ENCODE measurements at regions of chr2 and their contacts with region 1.

Region 1: DNA sequence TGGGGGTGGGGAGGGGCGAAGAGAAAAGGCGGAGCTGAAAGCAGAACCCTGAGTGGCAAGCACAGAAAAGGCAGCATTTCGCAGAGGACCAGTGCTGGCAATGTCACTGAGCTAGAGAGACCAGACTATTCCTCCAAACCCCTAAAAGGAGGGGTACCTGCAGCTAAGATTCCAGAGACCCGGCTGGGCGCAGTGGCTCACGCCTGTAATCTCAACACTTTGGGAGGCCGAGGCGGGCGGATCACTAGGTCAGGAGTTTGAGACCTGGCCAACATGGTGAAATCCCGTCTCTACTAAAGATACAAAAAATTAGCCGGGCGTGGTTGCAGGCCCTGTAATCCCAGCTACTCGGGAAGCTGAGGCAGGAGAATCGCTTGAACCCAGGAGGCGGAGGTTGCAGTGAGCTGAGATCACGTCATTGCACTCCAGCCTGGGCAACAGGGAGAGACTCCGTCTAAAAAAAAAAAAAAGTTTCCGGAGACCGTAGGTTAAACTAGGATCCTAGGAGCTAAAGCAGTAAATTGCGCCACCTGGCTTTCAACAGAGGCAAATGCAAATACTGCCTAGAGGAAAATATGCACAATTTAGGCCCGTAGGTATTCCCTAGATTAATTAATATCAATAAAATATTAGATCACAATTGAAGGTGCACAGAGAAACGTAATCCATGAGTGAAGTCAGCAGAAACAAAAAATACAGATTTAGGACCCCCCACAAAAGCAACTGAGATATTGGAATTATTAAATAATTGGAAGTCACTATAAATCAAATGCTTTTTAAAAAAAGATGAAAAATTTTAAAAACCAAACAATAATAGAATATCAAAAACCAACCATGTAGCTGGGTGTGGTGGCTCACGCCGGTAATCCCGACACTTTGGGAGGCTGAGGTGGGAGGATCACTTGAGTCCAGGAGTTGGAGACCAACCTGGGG is 4.9 kb downstream of the UCN start:
- DNase-seq: no peak
- H3K4me3 ChIP-seq: no peak overlapping the region
- CTCF ChIP-seq: peak; percentile 65

Region 2: GRCh38 chr2:26942543-26943295 is 360.6 kb before region 1 on chr2:
- CTCF ChIA-PET with region 1: no interaction called
- POLR2A ChIA-PET with region 1: no interaction called
- DNase-seq: no peak
- H3K4me3 ChIP-seq: no peak overlapping the region
- CTCF ChIP-seq: peak; percentile 77

Region 3: GRCh38 chr2:27086090-27086723 is 217.2 kb before region 1 on chr2:
- CTCF ChIA-PET with region 1: interaction called, 10 read pairs
- POLR2A ChIA-PET with region 1: no interaction called
- DNase-seq: no peak
- H3K4me3 ChIP-seq: peak overlapping the region; percentile 42
- CTCF ChIP-seq: peak; percentile 94

Region 4: GRCh38 chr2:27147935-27148334 is 155.4 kb before region 1 on chr2:
- CTCF ChIA-PET with region 1: no interaction called
- POLR2A ChIA-PET with region 1: no interaction called
- DNase-seq: no peak
- H3K4me3 ChIP-seq: no peak overlapping the region
- CTCF ChIP-seq: no peak

Region 5: DNA sequence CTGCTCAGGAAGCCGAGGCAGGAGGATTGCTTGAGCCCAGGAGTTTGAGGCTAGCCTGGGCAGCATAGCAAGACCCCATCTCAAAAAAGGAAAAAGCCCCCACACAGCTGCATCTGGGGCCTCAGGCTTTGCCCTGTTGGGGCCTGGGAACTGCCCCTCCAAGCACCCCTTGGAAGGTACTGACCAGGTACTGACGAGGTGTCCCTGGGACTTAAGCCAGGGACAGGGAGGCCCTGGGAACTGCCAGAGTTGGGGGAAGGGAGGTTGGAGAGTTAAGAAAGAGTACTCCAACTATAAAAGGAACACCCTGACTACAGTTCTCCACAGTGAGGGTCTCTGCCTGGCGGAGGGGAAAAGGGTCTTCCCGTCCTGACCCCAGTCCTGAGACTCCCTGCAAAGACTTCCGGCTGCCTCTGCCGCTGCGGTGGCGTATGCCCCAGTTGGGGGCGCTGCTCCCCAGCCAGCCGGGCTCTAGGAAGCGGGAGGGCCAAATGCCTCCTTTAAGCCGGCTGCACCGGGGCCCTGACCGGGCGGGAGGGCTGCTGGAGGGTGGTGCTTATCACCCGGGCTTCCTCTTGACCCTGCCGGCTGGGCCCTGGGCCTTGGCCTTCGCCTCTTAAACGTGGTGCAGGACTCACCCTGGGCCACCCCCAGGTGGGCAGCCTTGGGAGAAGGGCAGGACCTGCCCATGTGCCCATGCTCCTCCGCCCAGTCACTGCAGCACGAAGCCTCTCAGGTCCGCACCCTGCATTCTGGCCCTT is 53.3 kb before region 1 on chr2:
- CTCF ChIA-PET with region 1: interaction called, 24 read pairs
- POLR2A ChIA-PET with region 1: no interaction called
- DNase-seq: no peak
- H3K4me3 ChIP-seq: no peak overlapping the region
- CTCF ChIP-seq: peak; percentile 78

Region 6: GRCh38 chr2:27271631-27272340 is 31.6 kb before region 1 on chr2:
- CTCF ChIA-PET with region 1: interaction called, 18 read pairs
- POLR2A ChIA-PET with region 1: no interaction called
- DNase-seq: no peak
- H3K4me3 ChIP-seq: no peak overlapping the region
- CTCF ChIP-seq: no peak

Region 7: DNA sequence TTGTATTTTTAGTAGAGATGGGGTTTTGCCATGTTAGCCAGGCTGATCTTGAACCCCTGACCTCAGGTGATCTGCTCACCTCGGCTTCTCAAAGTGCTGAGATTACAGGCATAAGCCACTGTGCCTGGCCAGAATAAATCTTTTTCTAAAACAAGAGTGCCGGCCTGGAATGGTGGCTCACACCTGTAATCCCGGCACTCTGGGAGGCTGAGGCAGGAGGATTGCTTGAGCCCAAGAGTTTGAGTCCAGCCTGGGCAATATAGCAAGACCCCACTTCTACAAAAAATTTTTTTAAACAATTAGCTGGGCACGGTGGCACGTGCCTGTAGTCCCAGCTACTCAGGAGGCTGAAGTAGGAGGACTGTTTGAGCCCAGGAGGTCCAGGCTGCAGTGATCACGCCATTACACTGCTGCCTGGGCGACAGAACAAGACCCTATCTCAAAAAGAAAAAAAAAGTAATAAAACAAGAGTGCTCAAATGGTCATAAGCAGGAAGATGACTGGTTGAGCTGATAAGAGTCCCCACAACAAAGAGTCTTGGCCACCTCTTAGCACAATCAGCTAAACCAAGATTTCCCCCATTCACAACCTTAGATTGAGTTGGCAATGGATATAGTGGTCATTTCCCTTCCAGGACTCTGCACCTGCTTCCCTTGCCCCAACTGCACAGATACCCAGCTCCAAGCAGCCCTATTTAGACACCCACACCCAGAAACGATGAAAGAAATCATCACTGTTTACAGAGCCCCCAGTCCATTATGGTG is 10.7 kb after region 1 on chr2:
- CTCF ChIA-PET with region 1: interaction called, 94 read pairs
- POLR2A ChIA-PET with region 1: no interaction called
- DNase-seq: no peak
- H3K4me3 ChIP-seq: no peak overlapping the region
- CTCF ChIP-seq: no peak

Measured in AG04449 (cell line).